ENCODE measurements at regions of chr13 and their contacts with region 1.

Region 1: DNA sequence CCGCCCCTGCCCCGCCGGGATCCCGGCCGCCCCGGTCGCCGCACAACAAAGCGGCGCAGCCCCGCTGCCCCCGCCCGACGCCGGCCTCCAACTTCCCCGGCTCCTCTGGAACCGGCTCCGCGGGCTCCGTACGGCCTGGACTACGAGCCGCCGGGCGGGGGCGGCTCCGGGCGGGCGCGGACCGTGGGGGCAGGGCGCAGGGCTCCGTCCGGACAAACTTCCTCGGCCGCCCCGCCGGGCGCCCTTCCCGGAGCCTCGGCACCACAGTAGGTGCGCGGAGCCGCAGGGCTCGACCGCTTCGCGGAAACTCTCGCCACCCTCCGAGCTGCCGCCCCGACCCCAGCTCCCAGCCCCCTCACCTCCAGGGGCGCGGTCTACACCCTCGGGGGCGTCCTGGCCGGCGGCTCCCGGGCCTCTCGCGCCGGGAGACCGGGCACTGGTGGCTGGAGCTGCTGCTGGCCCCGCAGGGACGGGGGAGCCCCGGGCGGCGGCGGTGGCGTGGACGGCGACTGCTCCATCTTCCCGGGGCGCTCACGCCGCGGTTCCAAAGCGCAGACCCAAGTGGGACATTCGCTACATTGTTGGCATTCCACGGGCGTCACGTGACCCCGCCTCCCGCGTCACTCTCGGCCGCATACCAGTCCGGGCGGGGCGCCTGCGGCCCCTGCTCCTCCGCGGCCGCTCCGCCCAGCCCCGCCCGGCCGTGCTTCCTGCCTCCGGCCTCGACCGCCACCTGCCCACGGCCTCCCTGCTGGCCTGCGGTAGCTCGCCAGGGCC is at the start of gene LATS2:
- DNase-seq: peak; percentile 41
- H3K4me3 ChIP-seq: peak within 1 kb of the TSS; percentile 61
- H3K27ac ChIP-seq: no peak within 1 kb of the TSS
- H3K4me1 ChIP-seq: no peaks in the 10 kb centered on the region
- CTCF ChIP-seq: no peak
- total RNA-seq, gene LATS2: 0.10 and 0.19 TPM in 2 replicates

Region 2: DNA sequence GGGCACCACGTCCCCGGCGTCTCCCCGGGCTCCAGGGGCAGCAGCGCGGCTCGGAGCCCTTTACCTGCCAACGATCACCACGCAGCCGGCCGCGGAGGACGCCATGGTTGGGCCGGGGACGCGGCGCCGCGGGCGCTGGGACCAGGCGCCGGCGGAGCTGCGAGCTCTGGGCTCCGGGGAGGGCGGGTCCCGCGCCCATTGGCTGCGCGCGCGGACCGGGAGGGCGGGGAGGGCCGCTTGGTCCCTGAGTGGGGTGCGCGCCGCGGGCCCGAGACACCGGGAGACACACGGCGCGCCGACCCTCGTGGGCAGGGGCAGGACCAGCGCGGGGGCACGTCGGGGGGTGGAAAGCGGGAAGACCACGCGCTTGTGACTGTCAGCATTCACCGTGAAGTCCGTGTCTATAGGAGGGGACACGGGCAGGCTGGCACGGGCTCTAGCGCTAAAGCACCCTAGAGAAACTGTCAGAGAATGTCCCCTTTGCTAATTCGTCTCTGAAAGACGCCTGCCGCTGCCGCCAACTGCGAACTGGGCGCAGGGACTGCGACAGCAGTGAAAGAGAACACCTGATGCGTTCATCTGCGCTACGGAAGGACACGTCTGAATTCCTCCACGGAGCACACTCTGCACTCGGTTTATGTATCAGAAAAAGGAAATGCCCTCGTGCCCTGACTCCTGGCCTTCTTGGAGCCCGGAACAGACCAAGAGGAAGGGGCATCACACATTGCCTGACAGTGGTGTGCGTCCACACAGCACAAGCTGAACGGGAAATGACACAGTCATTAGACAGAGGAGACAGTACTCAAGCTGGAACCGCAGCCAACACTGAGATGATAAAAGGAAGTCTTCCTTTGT is 535.3 kb before region 1 on chr13 and contains the start of gene CRYL1:
- CTCF ChIA-PET with region 1: interaction called, 16 read pairs
- POLR2A ChIA-PET with region 1: no interaction called
- intact Hi-C with region 1: no loop called
- DNase-seq: no peak
- H3K4me3 ChIP-seq: no peak within 1 kb of the TSS
- H3K27ac ChIP-seq: no peak within 1 kb of the TSS
- H3K4me1 ChIP-seq: no peaks in the 10 kb centered on the region
- CTCF ChIP-seq: no peak
- total RNA-seq, gene CRYL1: not detected in 2 replicates

Region 3: DNA sequence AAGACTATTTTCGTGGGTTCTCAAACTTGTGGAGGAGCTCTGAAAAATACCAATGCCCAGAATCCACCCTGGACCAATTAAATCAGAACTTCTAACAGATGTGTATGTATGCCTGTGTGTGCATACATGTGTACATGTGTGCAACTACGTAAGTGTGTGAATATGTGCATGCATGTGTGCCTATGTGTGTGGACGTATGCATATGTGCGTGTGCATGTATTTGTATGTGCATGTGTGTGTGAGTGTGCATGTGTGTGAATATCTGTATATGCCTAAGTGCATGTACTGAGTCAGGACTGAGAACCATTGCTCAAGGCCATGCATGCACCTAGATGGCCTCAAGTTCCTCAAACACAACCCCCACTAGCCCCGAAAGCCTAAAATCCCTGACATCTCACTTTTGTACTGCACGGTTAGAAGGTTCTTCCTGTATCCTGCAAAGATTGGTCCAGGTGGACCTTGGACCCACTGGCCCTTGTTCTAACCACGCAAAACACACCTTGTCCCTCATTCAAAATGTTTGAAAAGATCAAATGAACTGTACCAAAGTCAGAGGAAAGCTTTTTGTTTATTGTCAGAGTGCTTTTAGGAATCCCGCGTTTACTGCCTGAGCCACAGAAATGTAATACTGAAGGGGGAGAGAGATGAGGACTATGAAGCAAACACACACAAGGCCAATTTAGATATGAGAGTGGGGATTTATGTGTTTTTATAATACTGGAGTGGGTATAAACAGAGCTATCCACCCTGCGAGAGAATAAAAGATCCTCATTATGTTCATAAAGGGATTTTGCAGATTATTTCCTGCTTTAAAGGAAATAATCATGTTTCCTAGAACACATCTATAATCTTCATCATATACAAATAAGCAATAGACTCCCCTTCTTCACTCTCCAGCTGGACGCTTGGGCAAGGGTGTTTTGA is 38.9 kb before region 1 on chr13:
- CTCF ChIA-PET with region 1: no interaction called
- POLR2A ChIA-PET with region 1: no interaction called
- intact Hi-C with region 1: no loop called
- DNase-seq: no peak
- H3K4me3 ChIP-seq: no peak overlapping the region
- H3K27ac ChIP-seq: no peak overlapping the region
- H3K4me1 ChIP-seq: no peaks in the 10 kb centered on the region
- CTCF ChIP-seq: no peak

Measured in OCI-LY7 (cell line).